WTC11 (cell line): ENCODE measurements at regions of chr1 and their contacts with region 1.

Region 1: DNA sequence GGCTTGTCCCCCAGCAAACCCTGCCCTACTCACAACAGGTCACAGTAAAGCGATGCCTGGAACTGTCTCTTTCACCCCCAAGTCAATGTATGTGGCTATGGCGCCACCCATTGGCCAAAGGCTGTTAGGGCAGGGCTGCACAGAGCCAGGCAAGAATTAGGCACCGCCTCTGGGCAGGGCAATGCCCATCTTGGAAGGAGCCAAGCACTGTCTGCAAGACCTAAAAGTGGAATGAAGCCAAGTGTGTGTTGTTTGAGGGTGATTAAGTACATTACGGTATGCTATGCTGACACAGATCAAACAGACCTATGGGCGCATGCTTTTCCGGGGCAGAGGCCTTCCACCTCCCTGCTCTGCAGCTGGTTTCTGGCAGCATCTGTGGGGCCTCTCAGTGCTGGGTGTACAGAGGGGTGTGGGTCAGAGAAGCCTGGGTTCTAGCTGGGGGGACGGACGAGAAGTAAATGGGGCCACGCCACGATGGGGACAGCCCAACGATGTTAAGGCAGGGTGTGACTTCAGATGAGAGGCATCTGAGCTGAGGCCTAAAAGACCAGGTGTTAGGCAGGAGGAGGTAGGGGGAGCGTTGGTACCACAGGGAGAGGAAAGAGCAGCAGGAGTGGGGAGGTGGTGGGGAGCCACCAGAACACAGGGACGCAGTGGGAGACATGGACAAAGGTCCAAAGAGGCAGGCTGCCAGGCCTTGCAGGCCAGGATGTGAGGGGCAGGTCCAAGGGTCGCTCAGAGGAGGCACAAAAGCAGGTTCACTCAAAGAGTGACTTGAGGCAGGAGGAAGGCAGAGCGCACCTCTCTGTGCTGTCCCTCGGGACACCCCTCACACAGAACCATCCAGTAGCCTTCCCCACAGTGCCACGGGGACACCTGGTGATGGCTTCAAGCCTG is 49.8 kb downstream of the ACOT7 start:
- DNase-seq: peak; percentile 91
- ATAC-seq: peak; percentile 92
- H3K4me3 Mint-ChIP-seq: no peak overlapping the region
- H3K27ac Mint-ChIP-seq: peak overlapping the region; percentile 60
- H3K4me1 Mint-ChIP-seq: peaks cover 14% of the 10 kb centered on the region
- H3K27me3 Mint-ChIP-seq: no peaks in the 10 kb centered on the region
- CTCF ChIP-seq: peak; percentile 94

Region 2: DNA sequence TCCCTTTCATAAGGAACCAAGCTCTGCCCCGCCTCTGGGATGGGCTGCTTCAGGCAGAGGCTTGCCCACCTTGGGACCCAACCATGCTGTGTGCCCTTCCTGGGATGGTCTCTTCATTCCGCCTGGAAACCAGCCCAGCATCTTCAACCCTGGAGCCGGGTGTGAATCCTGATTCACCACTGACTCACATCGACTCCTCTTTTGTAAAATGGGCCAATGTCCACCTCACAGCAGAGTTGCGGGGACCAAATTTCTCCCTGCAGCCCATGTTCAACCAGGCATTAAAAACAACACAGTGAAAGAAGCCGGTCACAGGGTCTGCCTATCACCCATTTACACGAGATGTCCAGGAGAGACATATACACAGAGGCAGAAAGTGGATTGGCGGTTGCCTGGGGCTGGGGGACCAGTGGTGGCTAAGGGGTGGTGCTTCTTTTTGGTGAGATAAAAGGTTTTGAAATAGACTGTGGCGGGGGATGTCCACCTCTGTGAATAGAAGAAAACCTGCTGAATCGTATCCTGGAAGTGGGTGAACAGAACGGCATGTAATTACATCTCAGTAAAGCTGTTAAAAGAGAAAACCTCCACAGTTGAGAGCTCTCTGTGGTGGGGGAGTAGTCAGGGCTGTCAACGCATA is 76.0 kb before region 1 on chr1:
- CTCF ChIA-PET with region 1: interaction called, 14 read pairs
- POLR2A ChIA-PET with region 1: no interaction called
- DNase-seq: no peak
- ATAC-seq: no peak
- H3K4me3 Mint-ChIP-seq: no peak overlapping the region
- H3K27ac Mint-ChIP-seq: peak overlapping the region; percentile 26; the same call in 1 of the 2 replicates
- H3K4me1 Mint-ChIP-seq: peaks cover 2% of the 10 kb centered on the region
- H3K27me3 Mint-ChIP-seq: no peaks in the 10 kb centered on the region
- CTCF ChIP-seq: no peak

Region 3: GRCh38 chr1:6309564-6309963 is 34.2 kb before region 1 on chr1:
- CTCF ChIA-PET with region 1: no interaction called
- POLR2A ChIA-PET with region 1: no interaction called
- DNase-seq: no peak
- ATAC-seq: no peak
- H3K4me3 Mint-ChIP-seq: no peak overlapping the region
- H3K27ac Mint-ChIP-seq: no peak overlapping the region
- H3K4me1 Mint-ChIP-seq: no peaks in the 10 kb centered on the region
- H3K27me3 Mint-ChIP-seq: no peaks in the 10 kb centered on the region
- CTCF ChIP-seq: no peak

Region 4: DNA sequence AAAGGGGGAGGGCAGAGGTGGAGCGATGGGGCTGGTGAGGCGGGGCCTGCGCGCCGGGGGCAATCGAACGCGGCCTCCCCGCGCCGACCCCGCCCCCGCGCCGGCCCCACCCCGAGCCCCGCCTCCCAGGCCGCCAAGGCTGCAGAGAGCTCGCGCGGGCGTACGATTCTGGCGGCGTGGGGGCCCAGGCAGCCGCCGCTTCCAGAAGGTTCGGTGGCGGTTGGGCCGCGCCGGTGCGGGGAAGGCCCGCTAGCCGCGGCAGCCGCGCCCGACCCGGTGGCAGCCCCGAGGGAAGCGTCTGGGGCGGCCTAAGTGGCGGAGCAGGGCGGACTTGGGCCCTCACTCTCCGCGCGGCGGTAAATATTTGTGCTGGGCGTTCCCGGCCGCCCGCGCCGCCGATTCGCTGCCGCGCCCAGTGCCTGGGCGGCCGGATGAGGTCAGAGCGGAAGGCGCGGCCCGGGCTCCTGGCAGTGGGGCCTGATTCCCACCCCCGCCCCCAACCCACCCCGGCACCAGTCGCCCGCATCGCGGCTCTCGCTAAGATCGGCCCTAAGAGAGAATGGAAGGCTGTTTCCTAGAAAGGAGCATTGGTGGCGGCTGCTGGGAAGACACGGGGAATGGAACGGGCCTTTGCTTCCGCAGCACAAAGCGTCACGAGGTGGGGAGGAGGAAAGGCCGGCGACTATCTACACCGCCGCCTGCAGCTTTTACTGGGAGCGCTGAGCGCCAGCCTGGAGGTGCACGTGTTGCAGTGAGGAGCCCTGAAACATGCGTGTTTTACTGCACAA is 49.8 kb after region 1 on chr1 and contains the start of gene ACOT7:
- CTCF ChIA-PET with region 1: interaction called, 21 read pairs
- POLR2A ChIA-PET with region 1: interaction called, 3 read pairs
- DNase-seq: peak; percentile 89
- ATAC-seq: peak; percentile 88
- H3K4me3 Mint-ChIP-seq: peak within 1 kb of the TSS; percentile 80
- H3K27ac Mint-ChIP-seq: peak within 1 kb of the TSS; percentile 95
- H3K4me1 Mint-ChIP-seq: peaks cover 18% of the 10 kb centered on the region
- H3K27me3 Mint-ChIP-seq: peaks cover 9% of the 10 kb centered on the region
- CTCF ChIP-seq: no peak
- total RNA-seq, gene ACOT7: 133 to 151 TPM (median 137 TPM) in 3 replicates

Region 5: GRCh38 chr1:6401673-6402072 is 57.9 kb after region 1 on chr1:
- CTCF ChIA-PET with region 1: interaction called, 18 read pairs
- POLR2A ChIA-PET with region 1: no interaction called
- DNase-seq: no peak
- ATAC-seq: no peak
- H3K4me3 Mint-ChIP-seq: no peak overlapping the region
- H3K27ac Mint-ChIP-seq: no peak overlapping the region
- H3K4me1 Mint-ChIP-seq: no peaks in the 10 kb centered on the region
- H3K27me3 Mint-ChIP-seq: peaks cover 20% of the 10 kb centered on the region
- CTCF ChIP-seq: no peak

Region 6: GRCh38 chr1:6414443-6414844 is 70.7 kb after region 1 on chr1:
- CTCF ChIA-PET with region 1: interaction called, 18 read pairs
- POLR2A ChIA-PET with region 1: no interaction called
- DNase-seq: peak; percentile 86
- ATAC-seq: peak; percentile 89
- H3K4me3 Mint-ChIP-seq: peak overlapping the region; percentile 47
- H3K27ac Mint-ChIP-seq: peak overlapping the region; percentile 95
- H3K4me1 Mint-ChIP-seq: peaks cover 20% of the 10 kb centered on the region
- H3K27me3 Mint-ChIP-seq: peaks cover 78% of the 10 kb centered on the region
- CTCF ChIP-seq: peak; percentile 62; the same call in 1 of the 2 replicates